CD4-positive, alpha-beta memory T cell (primary cell): ENCODE measurements at regions of chr11 and their contacts with region 1.

Region 1: GRCh38 chr11:10208131-10208575 is 85.9 kb downstream of the SBF2 start:
- DNase-seq: peak in 4 of 5 donors; percentile 45 to 55 (median 48)
- H3K4me3 ChIP-seq: no peak overlapping the region
- H3K4me3 Mint-ChIP-seq: no peak overlapping the region
- H3K27ac ChIP-seq: no peak overlapping the region
- H3K27ac Mint-ChIP-seq: no peak overlapping the region
- H3K4me1 ChIP-seq: no peaks in the 10 kb centered on the region
- H3K4me1 Mint-ChIP-seq: no peaks in the 10 kb centered on the region
- H3K27me3 ChIP-seq: no peaks in the 10 kb centered on the region
- H3K27me3 Mint-ChIP-seq: no peaks in the 10 kb centered on the region

Region 2: DNA sequence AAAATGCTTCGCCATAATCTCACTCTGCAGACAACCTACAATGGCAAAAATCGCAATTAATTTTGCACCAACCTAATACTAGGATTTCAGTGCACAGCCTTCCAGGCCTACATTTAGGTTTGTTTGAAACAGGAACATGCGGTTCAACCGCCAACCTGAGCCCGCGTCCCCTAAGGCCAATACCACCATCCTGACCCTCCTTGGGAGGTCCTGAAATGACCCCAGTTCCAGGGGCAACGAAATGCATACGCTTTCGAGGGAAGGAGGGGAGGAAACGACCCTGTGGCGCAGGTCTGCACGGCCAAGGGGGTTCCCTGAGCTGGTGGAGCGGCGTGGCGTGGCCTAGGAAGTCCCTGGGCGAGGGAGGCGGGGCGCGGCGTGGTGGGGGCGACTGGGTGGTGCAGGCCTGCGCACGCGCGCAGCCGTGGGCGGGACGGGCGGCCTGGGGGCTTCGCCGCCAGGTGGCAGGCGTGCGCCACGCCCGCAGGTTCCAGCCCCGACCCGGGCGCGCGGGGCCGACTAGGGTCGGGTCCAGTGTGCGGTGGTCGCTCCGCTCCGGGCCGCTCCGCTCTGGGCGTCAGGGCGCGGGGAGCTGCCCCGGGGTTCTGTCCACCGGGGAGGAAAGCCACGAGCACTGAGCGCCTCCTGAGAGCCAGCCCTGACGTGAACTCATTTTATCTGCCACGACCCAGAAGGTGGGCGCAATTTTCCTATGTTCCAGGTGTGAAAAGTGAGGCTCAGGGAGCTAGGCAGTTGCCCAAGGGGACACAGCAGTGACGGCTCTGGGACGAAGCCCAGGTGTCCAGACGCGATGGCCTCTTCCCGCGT is 450.1 kb before region 1 on chr11:
- CTCF ChIA-PET with region 1: interaction called, 6 read pairs
- POLR2A ChIA-PET with region 1: no interaction called
- intact Hi-C with region 1: loop called (anchors 1 kb)
- DNase-seq: peak; percentile 90 to 93 (median 90)
- H3K4me3 ChIP-seq: peak overlapping the region; percentile 44 to 75
- H3K4me3 Mint-ChIP-seq: peak overlapping the region; percentile 76 to 89 (median 84)
- H3K27ac ChIP-seq: peak overlapping the region; percentile 60
- H3K27ac Mint-ChIP-seq: peak overlapping the region; percentile 85 to 91 (median 89)
- H3K4me1 ChIP-seq: peaks cover 16% of the 10 kb centered on the region
- H3K4me1 Mint-ChIP-seq: peaks cover 10 to 25% (median 17%) of the 10 kb centered on the region in 4 donors
- H3K27me3 ChIP-seq: no peaks in the 10 kb centered on the region
- H3K27me3 Mint-ChIP-seq: no peaks in the 10 kb centered on the region

Region 3: GRCh38 chr11:10076458-10077141 is 131.6 kb before region 1 on chr11:
- CTCF ChIA-PET with region 1: no interaction called
- POLR2A ChIA-PET with region 1: no interaction called
- intact Hi-C with region 1: no loop called
- DNase-seq: peak in 1 of 5 donors; percentile 11
- H3K4me3 ChIP-seq: no peak overlapping the region
- H3K4me3 Mint-ChIP-seq: no peak overlapping the region
- H3K27ac ChIP-seq: no peak overlapping the region
- H3K27ac Mint-ChIP-seq: no peak overlapping the region
- H3K4me1 ChIP-seq: no peaks in the 10 kb centered on the region
- H3K4me1 Mint-ChIP-seq: peaks cover 0 to 1% (median 0%) of the 10 kb centered on the region in 4 donors
- H3K27me3 ChIP-seq: no peaks in the 10 kb centered on the region
- H3K27me3 Mint-ChIP-seq: no peaks in the 10 kb centered on the region

Region 4: GRCh38 chr11:10197091-10197490 is 11.1 kb before region 1 on chr11:
- CTCF ChIA-PET with region 1: interaction called, 11 read pairs
- POLR2A ChIA-PET with region 1: no interaction called
- intact Hi-C with region 1: no loop called
- DNase-seq: no peak
- H3K4me3 ChIP-seq: no peak overlapping the region
- H3K4me3 Mint-ChIP-seq: no peak overlapping the region
- H3K27ac ChIP-seq: no peak overlapping the region
- H3K27ac Mint-ChIP-seq: no peak overlapping the region
- H3K4me1 ChIP-seq: no peaks in the 10 kb centered on the region
- H3K4me1 Mint-ChIP-seq: no peaks in the 10 kb centered on the region
- H3K27me3 ChIP-seq: no peaks in the 10 kb centered on the region
- H3K27me3 Mint-ChIP-seq: no peaks in the 10 kb centered on the region

Region 5: GRCh38 chr11:10221342-10221741 is 13.2 kb after region 1 on chr11:
- CTCF ChIA-PET with region 1: interaction called, 11 read pairs
- POLR2A ChIA-PET with region 1: no interaction called
- intact Hi-C with region 1: no loop called
- DNase-seq: no peak
- H3K4me3 ChIP-seq: no peak overlapping the region
- H3K4me3 Mint-ChIP-seq: no peak overlapping the region
- H3K27ac ChIP-seq: no peak overlapping the region
- H3K27ac Mint-ChIP-seq: no peak overlapping the region
- H3K4me1 ChIP-seq: no peaks in the 10 kb centered on the region
- H3K4me1 Mint-ChIP-seq: no peaks in the 10 kb centered on the region
- H3K27me3 ChIP-seq: no peaks in the 10 kb centered on the region
- H3K27me3 Mint-ChIP-seq: no peaks in the 10 kb centered on the region

Region 6: GRCh38 chr11:10314199-10315072 is 106.3 kb after region 1 on chr11:
- CTCF ChIA-PET with region 1: interaction called, 349 read pairs
- POLR2A ChIA-PET with region 1: no interaction called
- intact Hi-C with region 1: no loop called
- DNase-seq: peak in 4 of 5 donors; percentile 18 to 41 (median 30)
- H3K4me3 ChIP-seq: no peak overlapping the region
- H3K4me3 Mint-ChIP-seq: no peak overlapping the region
- H3K27ac ChIP-seq: no peak overlapping the region
- H3K27ac Mint-ChIP-seq: peak overlapping the region in 1 of 7 donors; percentile 19
- H3K4me1 ChIP-seq: no peaks in the 10 kb centered on the region
- H3K4me1 Mint-ChIP-seq: no peaks in the 10 kb centered on the region
- H3K27me3 ChIP-seq: no peaks in the 10 kb centered on the region
- H3K27me3 Mint-ChIP-seq: peaks cover 9 to 28% of the 10 kb centered on the region in 2 donors

Region 7: GRCh38 chr11:10322830-10323792 is 115.0 kb after region 1 on chr11:
- CTCF ChIA-PET with region 1: interaction called, 32 read pairs
- POLR2A ChIA-PET with region 1: no interaction called
- intact Hi-C with region 1: loop called (anchors 1 kb)
- DNase-seq: peak; percentile 48 to 81 (median 50)
- H3K4me3 ChIP-seq: no peak overlapping the region
- H3K4me3 Mint-ChIP-seq: peak overlapping the region in 2 of 8 donors; percentile 3 to 18
- H3K27ac ChIP-seq: no peak overlapping the region
- H3K27ac Mint-ChIP-seq: peak overlapping the region in 3 of 7 donors; percentile 46 to 76 (median 64)
- H3K4me1 ChIP-seq: peaks cover 5% of the 10 kb centered on the region
- H3K4me1 Mint-ChIP-seq: peaks cover 0 to 2% (median under 1%) of the 10 kb centered on the region in 4 donors
- H3K27me3 ChIP-seq: peaks cover 4% of the 10 kb centered on the region
- H3K27me3 Mint-ChIP-seq: peaks cover 8 to 15% of the 10 kb centered on the region in 2 donors